Prostate gland (tissue), 2 donors: ENCODE measurements at regions of chr4 and their contacts with region 1.

Region 1: DNA sequence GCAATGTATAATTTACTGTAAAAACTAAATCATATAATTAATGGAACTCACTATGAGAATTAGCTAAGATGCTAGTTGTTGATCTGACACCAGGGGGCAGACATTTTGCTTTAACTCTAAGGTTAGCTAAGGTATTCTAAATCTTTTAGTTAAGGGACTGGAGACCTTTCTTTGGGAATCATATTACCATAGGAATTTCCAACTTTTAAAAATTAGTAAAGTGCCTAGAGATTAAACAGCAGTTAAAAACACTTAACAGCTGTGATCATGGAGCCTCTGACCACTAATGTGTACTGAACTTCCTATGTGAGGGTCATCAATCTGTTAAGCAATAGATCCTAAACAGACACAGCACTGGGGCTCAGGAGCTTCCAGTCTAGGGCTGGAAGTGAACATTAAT is 226.6 kb downstream of the NSUN7 start:
- DNase-seq: peak; percentile 68
- H3K4me3 ChIP-seq: no peak overlapping the region
- H3K27ac ChIP-seq: no peak overlapping the region
- H3K4me1 ChIP-seq: no peaks in the 10 kb centered on the region
- H3K27me3 ChIP-seq: no peaks in the 10 kb centered on the region
- CTCF ChIP-seq: peak; percentile 47 to 83 (median 76)
- POLR2A ChIP-seq: no peak

Region 2: DNA sequence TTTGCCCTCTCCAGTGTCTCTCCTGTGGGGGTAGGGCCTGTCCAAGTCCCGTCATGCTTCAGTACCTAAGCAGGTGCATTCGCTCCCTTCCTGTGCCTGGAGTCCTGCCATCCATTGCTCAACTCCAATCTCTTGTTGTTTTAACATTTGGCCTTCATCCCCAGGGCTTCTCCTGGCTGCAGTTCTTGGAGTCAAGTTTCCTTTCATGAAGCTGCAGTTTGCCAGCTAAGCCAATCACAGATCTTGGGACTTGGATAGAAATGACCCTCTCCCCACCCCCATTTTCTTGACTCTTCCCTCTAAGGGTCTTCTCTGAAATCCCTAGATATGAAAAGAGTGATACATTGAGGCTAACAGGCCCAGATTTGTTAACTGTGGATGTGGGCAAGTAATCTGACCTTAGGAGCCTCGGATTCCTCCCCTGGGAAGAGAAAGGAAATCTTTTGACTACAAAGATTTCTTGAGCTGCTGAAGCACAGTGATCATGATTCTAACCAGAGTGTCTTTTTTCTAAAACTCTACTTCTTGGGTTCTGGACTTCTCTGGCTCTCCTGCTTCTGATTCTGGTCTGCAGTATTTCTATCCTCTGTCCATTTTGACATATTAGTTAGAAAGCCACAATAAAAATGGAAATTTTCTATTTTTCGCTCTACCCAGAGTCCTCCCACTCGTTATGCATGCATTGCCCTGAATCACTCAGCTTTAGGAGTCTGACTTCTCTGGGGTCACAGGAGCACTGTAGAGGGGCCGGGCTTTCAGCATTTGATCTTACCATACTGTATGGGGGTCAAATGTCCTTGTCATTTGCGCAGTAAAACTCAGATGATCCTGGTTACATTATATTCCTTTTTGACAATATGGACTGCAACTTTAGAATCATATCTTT is 580.2 kb before region 1 on chr4:
- intact Hi-C with region 1: no loop called
- DNase-seq: peak; percentile 93
- H3K4me3 ChIP-seq: no peak overlapping the region
- H3K27ac ChIP-seq: peak overlapping the region; percentile 26 to 43
- H3K4me1 ChIP-seq: no peaks in the 10 kb centered on the region
- H3K27me3 ChIP-seq: no peaks in the 10 kb centered on the region
- CTCF ChIP-seq: no peak
- POLR2A ChIP-seq: no peak

Region 3: DNA sequence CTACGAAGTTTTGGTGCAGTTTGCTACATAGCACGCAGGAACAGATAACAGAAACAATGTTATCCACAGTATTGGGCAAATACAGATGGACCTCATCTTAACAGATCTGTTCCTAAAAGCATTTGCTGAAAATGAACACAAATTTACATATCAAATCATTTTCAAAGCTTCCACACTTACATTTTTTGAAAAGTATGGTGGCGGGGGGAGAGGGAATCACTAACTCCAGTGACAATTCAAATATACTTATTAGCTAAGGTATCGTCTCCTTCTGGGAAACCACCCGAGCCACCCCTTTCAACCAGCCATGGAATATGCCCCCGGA is 51.6 kb before region 1 on chr4:
- intact Hi-C with region 1: loop called (anchors 5 kb)
- DNase-seq: no peak
- H3K4me3 ChIP-seq: no peak overlapping the region
- H3K27ac ChIP-seq: no peak overlapping the region
- H3K4me1 ChIP-seq: no peaks in the 10 kb centered on the region
- H3K27me3 ChIP-seq: no peaks in the 10 kb centered on the region
- CTCF ChIP-seq: no peak
- POLR2A ChIP-seq: no peak

Region 4: DNA sequence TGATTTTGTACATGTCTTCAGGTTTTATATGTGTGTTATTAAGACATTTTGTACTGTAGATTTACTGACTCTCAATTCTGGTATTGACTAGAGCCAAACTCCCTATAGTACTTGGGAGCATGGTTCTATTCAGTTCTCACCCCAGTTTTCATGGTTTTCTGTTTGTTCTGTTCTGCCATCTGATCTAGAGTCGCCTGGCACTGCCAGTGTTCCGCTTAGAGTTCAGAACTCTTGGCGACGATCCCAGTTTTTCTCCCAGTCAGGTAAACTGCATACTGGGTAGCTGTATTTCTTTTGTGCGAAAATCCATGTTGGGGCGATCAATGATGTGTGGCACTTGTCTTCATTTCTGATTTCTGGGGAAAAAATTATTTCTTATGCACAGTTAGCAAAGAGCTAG is 694.2 kb after region 1 on chr4:
- intact Hi-C with region 1: no loop called
- DNase-seq: peak; percentile 33
- H3K4me3 ChIP-seq: no peak overlapping the region
- H3K27ac ChIP-seq: no peak overlapping the region
- H3K4me1 ChIP-seq: no peaks in the 10 kb centered on the region
- H3K27me3 ChIP-seq: no peaks in the 10 kb centered on the region
- CTCF ChIP-seq: no peak
- POLR2A ChIP-seq: no peak